HEK293 (cell line): ENCODE measurements at regions of chr6 and their contacts with region 1.

Region 1: GRCh38 chr6:2756687-2757224 is 6.0 kb upstream of the MYLK4 start:
- H3K4me3 ChIP-seq: no peak overlapping the region
- H3K27ac ChIP-seq: no peak overlapping the region
- H3K4me1 ChIP-seq: no peaks in the 10 kb centered on the region
- CTCF ChIP-seq: no peak

Region 2: GRCh38 chr6:2738373-2738979 is 18.3 kb before region 1 on chr6:
- CTCF ChIA-PET with region 1: interaction called, 212 read pairs
- POLR2A ChIA-PET with region 1: interaction called, 3 read pairs
- H3K4me3 ChIP-seq: no peak overlapping the region
- H3K27ac ChIP-seq: no peak overlapping the region
- H3K4me1 ChIP-seq: no peaks in the 10 kb centered on the region
- CTCF ChIP-seq: peak; percentile 82